OCI-LY7 (cell line): ENCODE measurements at regions of chr10 and their contacts with region 1.

Region 1: DNA sequence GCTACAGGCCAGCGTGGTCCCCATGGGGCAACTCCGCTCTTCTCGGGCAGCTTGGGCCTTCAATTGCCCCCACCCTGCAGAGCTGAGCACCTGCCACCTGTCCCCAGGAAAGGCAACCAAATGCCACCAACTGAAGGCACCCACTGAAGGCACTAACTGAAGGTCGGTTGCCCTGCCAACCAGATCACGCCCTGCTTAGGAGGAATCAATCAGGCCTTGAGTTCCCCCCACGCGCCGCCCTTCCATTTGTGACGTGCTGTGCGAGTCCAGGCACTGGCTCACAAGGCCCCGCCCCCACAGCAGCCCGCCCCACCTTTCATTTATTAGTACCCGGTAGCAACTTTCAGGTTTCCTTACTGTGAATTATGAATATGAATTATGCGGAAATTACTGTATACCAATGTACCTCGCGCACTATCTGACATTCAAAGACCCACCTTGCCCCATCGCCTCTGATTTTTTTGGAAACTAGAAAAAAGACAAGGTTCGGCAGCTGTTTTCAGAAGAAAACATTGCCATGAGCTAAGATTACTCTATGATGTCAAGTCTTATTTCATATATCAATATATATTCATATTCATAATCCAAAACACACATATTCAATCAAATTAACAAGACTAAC is 83.6 kb upstream of the ABI1 start:
- DNase-seq: peak; percentile 18
- H3K4me3 ChIP-seq: no peak overlapping the region
- H3K27ac ChIP-seq: no peak overlapping the region
- H3K4me1 ChIP-seq: no peaks in the 10 kb centered on the region
- CTCF ChIP-seq: no peak

Region 2: DNA sequence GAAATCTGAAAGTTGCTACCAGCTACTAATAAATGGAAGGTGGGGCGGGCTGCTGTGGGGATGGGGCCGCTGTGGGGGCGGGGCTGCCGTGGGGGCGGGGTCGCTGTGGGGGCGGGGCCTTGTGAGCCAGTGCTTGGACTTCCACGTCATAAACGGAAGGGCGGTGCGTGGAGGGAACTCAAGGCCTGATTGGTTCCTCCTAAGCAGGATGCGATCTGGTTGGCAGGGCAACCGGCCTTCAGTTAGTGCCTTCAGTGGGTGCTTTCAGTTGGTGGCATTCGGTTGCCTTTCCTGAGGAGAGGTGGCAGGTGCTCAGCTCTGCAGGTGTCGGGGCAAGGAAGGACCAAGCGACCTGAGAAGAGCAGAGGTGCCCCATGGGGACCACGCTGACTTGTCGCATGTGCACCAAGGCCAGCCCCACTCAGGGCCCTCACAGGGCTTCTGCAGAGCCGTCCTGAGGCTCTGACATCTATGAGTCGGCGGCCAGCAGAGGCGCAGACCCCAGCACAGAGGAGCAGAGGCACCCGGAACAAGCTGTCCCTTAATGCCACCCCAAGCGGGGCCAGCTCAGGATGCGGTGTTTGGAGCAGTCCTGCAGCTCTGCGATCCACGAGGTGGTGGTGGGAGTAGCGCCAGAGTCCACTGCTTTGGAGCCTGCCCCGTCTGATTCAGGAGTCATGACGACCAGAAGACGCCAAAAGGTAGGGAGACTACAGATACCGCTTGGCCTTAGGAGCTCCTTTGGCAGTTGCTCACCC is 301.3 kb before region 1 on chr10:
- CTCF ChIA-PET with region 1: no interaction called
- POLR2A ChIA-PET with region 1: no interaction called
- intact Hi-C with region 1: loop called (anchors 1 kb)
- DNase-seq: peak; percentile 19
- H3K4me3 ChIP-seq: no peak overlapping the region
- H3K27ac ChIP-seq: no peak overlapping the region
- H3K4me1 ChIP-seq: no peaks in the 10 kb centered on the region
- CTCF ChIP-seq: no peak

Region 3: DNA sequence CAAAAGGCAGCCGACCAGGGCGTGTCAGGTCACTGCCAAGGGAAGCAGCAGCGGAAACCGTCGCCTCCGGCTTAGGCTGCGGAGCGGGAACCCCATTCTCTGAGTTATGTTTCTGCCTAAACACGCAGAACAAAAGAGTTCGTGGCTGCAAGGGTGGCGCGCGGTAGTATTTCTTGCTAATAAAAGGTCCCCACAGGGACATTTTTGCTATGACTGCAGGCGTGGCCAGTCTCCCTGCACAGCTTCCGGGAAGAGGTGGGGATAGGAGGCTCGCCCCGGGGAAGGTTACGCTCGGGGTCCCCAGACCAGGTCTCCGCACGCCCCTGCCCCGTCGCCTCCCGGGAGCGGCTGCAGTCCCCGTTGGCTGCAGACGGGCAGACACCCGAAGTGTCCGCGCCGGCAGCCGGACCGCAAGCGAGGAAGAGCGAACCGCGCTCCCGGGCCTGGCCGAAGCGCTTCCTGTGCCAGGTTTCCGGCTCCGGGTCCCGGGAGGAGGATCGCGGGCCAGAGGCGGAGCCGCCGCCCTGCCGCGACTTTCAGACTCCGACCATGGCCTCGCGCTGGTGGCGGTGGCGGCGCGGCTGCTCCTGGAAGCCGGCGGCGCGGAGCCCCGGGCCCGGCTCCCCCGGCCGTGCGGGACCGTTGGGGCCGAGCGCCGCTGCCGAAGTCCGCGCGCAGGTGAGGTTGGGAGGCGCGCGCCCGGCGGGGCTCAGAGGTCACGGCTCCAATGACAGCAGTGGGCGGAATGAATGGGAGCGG is 247.0 kb before region 1 on chr10 and contains the start of gene PDSS1:
- CTCF ChIA-PET with region 1: no interaction called
- POLR2A ChIA-PET with region 1: no interaction called
- intact Hi-C with region 1: no loop called
- DNase-seq: peak; percentile 79
- H3K4me3 ChIP-seq: peak within 1 kb of the TSS; percentile 78
- H3K27ac ChIP-seq: peak within 1 kb of the TSS; percentile 79
- H3K4me1 ChIP-seq: peaks cover 14% of the 10 kb centered on the region
- CTCF ChIP-seq: no peak
- total RNA-seq, gene PDSS1: 16.9 and 23.0 TPM in 2 replicates

Region 4: DNA sequence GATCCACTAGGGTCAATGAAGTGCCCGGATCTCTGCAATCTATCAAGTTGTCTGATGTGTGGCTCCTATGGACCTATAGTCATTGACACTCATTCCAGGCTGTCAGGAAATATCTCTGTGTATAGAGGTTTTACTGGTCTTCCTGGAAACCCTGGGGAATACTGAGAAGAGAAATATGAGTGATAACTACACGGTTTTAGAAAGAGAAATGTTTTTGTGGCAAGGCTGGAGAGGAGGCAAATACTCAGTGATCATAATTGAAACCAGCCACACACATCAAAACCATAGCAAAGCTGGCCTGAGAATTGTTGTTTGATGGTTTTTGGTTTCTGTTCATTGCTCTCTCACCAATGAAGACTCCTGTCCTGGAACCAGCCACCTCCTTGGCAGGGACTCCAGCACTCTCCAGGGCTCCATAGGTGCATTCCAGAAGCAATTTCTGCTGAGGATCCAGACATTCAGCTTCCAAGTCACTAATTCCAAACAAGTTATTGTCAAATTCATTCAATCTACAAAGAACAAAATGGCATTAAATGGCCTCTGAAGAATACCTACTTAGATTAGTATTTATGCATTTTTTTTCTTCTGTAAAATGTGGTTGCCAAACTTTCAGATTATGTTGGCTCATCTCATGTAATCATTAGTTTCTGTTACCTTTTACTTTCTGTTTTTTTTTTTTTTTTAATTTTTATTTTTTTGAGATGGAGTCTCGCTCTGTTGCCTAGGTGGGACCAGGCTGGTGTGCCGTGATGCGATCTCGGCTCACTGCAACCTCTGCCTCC is 25.0 kb after region 1 on chr10:
- CTCF ChIA-PET with region 1: no interaction called
- POLR2A ChIA-PET with region 1: no interaction called
- intact Hi-C with region 1: no loop called
- DNase-seq: no peak
- H3K4me3 ChIP-seq: no peak overlapping the region
- H3K27ac ChIP-seq: no peak overlapping the region
- H3K4me1 ChIP-seq: no peaks in the 10 kb centered on the region
- CTCF ChIP-seq: no peak